Adrenal gland (tissue), 19 donors: ENCODE measurements at regions of chr7 and their contacts with region 1.

Region 1: DNA sequence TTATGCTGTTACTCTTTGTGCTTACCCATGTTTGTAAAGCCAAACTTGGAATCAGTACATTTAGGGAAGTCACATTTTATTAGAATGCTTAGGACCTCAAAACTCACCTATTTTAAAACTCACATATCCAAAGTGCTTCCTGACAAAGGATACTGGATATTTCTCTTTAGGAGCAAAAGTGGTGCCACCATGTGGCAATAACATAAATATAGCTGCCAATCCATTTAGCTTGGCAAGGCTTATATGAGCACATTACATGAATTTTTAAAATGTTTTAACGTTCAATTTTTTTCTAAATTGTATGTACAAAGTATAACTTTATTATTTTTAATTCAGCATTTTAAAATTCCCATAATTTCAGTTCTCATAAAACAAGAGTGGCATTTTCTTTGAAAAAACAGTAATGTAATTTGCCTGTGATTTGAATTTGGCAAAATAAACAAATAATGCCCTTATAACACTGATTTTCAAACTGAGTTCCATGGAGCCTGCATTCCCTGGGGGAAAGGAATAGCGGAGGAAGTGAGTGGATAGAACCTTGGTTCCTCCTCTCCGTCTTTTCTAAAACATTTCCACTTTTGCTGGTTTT is 75.4 kb downstream of the HDAC9 start:
- DNase-seq: peak in 2 of 7 donors; percentile 13 to 36
- H3K4me3 ChIP-seq: no peak overlapping the region
- H3K27ac ChIP-seq: no peak overlapping the region
- H3K4me1 ChIP-seq: no peaks in the 10 kb centered on the region
- H3K27me3 ChIP-seq: no peaks in the 10 kb centered on the region
- CTCF ChIP-seq: peak; percentile 16 to 56 (median 41)
- POLR2A ChIP-seq: no peak

Region 2: GRCh38 chr7:18352339-18353255 is 218.4 kb before region 1 on chr7:
- intact Hi-C with region 1: loop called (anchors 5 to 10 kb)
- DNase-seq: peak; percentile 18 to 73 (median 51)
- H3K4me3 ChIP-seq: no peak overlapping the region
- H3K27ac ChIP-seq: no peak overlapping the region
- H3K4me1 ChIP-seq: peaks cover 0 to 6% of the 10 kb centered on the region in 2 donors
- H3K27me3 ChIP-seq: peaks cover 3% of the 10 kb centered on the region
- CTCF ChIP-seq: peak; percentile 30 to 61 (median 56)
- POLR2A ChIP-seq: no peak

Region 3: DNA sequence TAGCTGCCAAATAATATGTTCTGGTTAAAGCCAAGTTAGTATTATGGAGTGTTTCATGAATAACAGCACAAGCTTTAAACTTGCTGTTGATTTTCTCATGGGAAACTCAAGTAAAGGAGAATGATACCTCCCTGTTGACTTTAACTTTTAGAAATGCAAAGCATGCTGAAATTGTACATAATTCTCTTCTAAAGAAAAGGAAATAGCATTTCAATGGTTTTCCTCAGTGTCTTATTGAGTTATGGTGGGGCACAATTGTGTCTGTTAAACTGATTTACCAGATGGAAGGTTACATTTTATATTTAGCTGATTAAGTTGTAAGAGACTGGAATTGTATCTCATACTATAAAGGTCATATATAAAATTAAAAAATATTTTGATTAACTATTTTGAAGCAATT is 43.9 kb after region 1 on chr7:
- intact Hi-C with region 1: no loop called
- DNase-seq: no peak
- H3K4me3 ChIP-seq: no peak overlapping the region
- H3K27ac ChIP-seq: no peak overlapping the region
- H3K4me1 ChIP-seq: no peaks in the 10 kb centered on the region
- H3K27me3 ChIP-seq: no peaks in the 10 kb centered on the region
- CTCF ChIP-seq: no peak
- POLR2A ChIP-seq: no peak